CD4-positive, alpha-beta T cell (primary cell): ENCODE measurements at regions of chr6 and their contacts with region 1.

Region 1: GRCh38 chr6:1524040-1524480 is 85.7 kb upstream of the FOXC1 start:
- DNase-seq: peak; percentile 54 to 89 (median 70)
- ATAC-seq: peak; percentile 67
- H3K4me3 ChIP-seq: peak overlapping the region; percentile 40
- H3K4me3 Mint-ChIP-seq: peak overlapping the region; percentile 75
- H3K27ac ChIP-seq: peak overlapping the region in 1 of 2 donors; percentile 45
- H3K27ac Mint-ChIP-seq: peak overlapping the region; percentile 94
- H3K4me1 ChIP-seq: peaks cover 54% of the 10 kb centered on the region
- H3K4me1 Mint-ChIP-seq: peaks cover 52% of the 10 kb centered on the region
- H3K27me3 ChIP-seq: no peaks in the 10 kb centered on the region
- H3K27me3 Mint-ChIP-seq: no peaks in the 10 kb centered on the region
- CTCF ChIP-seq: peak; percentile 94

Region 2: GRCh38 chr6:912871-913835 is 610.9 kb before region 1 on chr6:
- CTCF ChIA-PET with region 1: no interaction called
- POLR2A ChIA-PET with region 1: no interaction called
- intact Hi-C with region 1: no loop called
- DNase-seq: no peak
- ATAC-seq: no peak
- H3K4me3 ChIP-seq: no peak overlapping the region
- H3K4me3 Mint-ChIP-seq: no peak overlapping the region
- H3K27ac ChIP-seq: no peak overlapping the region
- H3K27ac Mint-ChIP-seq: no peak overlapping the region
- H3K4me1 ChIP-seq: no peaks in the 10 kb centered on the region
- H3K4me1 Mint-ChIP-seq: no peaks in the 10 kb centered on the region
- H3K27me3 ChIP-seq: peaks cover 10 to 13% of the 10 kb centered on the region in 2 experiments
- H3K27me3 Mint-ChIP-seq: peaks cover 69% of the 10 kb centered on the region
- CTCF ChIP-seq: no peak

Region 3: GRCh38 chr6:1554476-1555310 is 30.6 kb after region 1 on chr6:
- CTCF ChIA-PET with region 1: interaction called, 16 read pairs
- POLR2A ChIA-PET with region 1: interaction called, 93 read pairs
- intact Hi-C with region 1: loop called (anchors 1 kb)
- DNase-seq: peak; percentile 41 to 86 (median 60)
- ATAC-seq: peak; percentile 88
- H3K4me3 ChIP-seq: peak overlapping the region; percentile 72
- H3K4me3 Mint-ChIP-seq: peak overlapping the region; percentile 80
- H3K27ac ChIP-seq: peak overlapping the region in 1 of 2 donors; percentile 25
- H3K27ac Mint-ChIP-seq: peak overlapping the region; percentile 78
- H3K4me1 ChIP-seq: peaks cover 15% of the 10 kb centered on the region
- H3K4me1 Mint-ChIP-seq: peaks cover 43% of the 10 kb centered on the region
- H3K27me3 ChIP-seq: no peaks in the 10 kb centered on the region
- H3K27me3 Mint-ChIP-seq: no peaks in the 10 kb centered on the region
- CTCF ChIP-seq: peak; percentile 81

Region 4: DNA sequence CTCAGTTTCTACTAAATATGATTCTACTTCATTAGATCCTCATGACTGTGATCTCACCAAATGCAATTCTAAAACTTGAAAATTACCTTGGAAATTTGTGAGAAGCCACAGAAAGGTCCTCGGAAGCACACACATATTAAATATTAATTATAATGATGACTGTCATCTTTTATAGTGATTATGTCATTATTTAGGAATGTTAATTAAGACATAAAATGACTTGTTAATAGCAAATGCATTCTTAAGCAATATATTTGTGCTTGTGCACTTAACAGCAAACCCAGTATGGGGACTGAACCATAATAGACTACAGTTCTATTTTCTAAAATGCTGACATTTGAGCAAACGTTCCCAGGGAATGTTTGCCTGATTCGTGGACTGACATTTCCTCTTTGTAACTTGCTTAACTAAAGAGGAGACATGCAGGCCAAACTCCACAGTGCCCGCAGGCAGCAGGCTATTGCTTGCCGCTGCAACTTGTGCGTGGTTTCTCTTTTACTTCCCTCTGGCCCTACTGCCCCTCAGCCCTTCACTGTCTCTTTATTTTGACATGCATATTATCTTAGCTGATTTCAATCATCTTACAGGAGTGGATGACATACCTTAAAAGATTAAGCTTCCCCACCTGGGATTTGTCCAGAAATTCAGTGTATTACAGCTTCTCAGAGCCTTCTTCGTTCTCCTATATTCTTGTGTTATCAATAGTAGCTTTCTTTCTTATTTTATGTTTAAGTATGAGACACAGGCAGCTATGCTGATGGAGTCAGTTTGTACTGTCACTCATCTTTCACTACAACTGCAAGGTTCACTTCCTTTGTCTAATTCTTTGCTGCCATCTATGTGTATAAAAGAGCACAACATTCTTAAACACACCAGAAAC is 579.8 kb after region 1 on chr6:
- CTCF ChIA-PET with region 1: no interaction called
- POLR2A ChIA-PET with region 1: no interaction called
- intact Hi-C with region 1: loop called (anchors 2 kb)
- DNase-seq: peak in 3 of 14 experiments; percentile 44 to 50 (median 45)
- ATAC-seq: peak; percentile 58
- H3K4me3 ChIP-seq: no peak overlapping the region
- H3K4me3 Mint-ChIP-seq: no peak overlapping the region
- H3K27ac ChIP-seq: no peak overlapping the region
- H3K27ac Mint-ChIP-seq: no peak overlapping the region
- H3K4me1 ChIP-seq: no peaks in the 10 kb centered on the region
- H3K4me1 Mint-ChIP-seq: no peaks in the 10 kb centered on the region
- H3K27me3 ChIP-seq: no peaks in the 10 kb centered on the region
- H3K27me3 Mint-ChIP-seq: no peaks in the 10 kb centered on the region
- CTCF ChIP-seq: peak; percentile 63

Region 5: DNA sequence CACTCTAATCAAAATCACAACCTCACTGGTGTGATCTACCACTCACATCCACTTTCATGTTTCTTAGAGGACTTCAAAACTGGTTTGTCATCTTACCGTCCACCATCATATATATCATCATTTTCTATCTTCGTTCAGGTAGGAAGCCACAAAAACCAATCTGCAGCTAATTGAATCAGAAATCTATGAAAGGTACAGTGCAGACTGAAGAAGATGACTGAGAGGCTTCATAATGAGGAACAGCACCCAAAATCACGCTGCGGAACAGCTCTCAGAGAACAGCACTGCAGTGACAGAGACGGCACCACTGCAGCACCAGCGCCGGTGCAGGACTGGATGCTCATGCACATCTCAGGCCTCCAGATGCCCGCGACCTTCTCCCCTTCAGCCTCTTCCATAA is 708.4 kb after region 1 on chr6:
- CTCF ChIA-PET with region 1: no interaction called
- POLR2A ChIA-PET with region 1: no interaction called
- intact Hi-C with region 1: no loop called
- DNase-seq: no peak
- ATAC-seq: no peak
- H3K4me3 ChIP-seq: no peak overlapping the region
- H3K4me3 Mint-ChIP-seq: no peak overlapping the region
- H3K27ac ChIP-seq: no peak overlapping the region
- H3K27ac Mint-ChIP-seq: no peak overlapping the region
- H3K4me1 ChIP-seq: no peaks in the 10 kb centered on the region
- H3K4me1 Mint-ChIP-seq: peaks cover 20% of the 10 kb centered on the region
- H3K27me3 ChIP-seq: no peaks in the 10 kb centered on the region
- H3K27me3 Mint-ChIP-seq: no peaks in the 10 kb centered on the region
- CTCF ChIP-seq: no peak

Region 6: DNA sequence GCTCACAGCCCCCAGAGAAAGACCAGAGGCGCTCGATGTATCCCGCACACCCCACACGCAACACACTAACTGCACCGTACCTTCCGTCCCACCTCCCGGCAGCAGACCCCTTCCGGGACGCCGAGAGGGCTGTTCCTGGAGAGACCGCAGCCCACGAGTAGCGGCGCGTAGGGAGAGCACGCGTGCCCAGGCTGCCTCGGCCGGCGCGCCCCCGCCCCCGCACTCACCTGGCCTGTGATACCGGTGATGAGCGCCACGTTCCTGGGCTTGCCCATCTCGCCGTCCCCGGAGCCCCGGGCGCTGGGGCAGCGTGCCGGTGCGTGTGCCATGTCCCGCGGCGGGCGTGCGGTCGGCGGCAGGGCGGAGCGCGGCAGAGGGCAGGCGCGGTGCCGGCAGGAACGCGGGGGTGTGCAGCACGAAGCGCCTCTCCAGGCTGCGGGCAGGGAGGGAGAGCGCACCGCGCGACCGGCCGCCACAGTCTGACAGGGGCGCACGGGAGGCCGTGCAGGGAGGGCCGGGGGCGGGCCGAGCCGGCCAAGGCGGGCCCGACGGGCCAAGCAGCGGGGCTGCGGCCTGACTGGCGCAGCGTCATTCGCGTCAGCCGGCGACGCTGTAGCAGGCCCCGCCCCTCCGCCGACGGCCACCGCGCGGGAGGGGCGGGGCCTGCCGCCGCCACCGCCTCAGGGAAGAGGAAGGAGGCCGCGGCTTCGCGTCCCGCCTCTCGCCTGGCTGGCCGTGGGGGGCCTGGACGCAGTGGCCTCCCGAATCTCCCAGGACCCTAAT is 721.2 kb after region 1 on chr6 and contains the start of gene GMDS:
- CTCF ChIA-PET with region 1: no interaction called
- POLR2A ChIA-PET with region 1: no interaction called
- intact Hi-C with region 1: loop called in 1 of 2 experiments (anchors 5 kb)
- DNase-seq: peak; percentile 60 to 95 (median 78)
- ATAC-seq: peak; percentile 88
- H3K4me3 ChIP-seq: peak within 1 kb of the TSS; percentile 97
- H3K4me3 Mint-ChIP-seq: peak within 1 kb of the TSS; percentile 94
- H3K27ac ChIP-seq: peak within 1 kb of the TSS; percentile 50 to 88
- H3K27ac Mint-ChIP-seq: peak within 1 kb of the TSS; percentile 96
- H3K4me1 ChIP-seq: peaks cover 29% of the 10 kb centered on the region
- H3K4me1 Mint-ChIP-seq: peaks cover 69% of the 10 kb centered on the region
- H3K27me3 ChIP-seq: no peaks in the 10 kb centered on the region
- H3K27me3 Mint-ChIP-seq: no peaks in the 10 kb centered on the region
- CTCF ChIP-seq: no peak
- total RNA-seq, gene GMDS: 13.9 to 16.4 TPM

Region 7: DNA sequence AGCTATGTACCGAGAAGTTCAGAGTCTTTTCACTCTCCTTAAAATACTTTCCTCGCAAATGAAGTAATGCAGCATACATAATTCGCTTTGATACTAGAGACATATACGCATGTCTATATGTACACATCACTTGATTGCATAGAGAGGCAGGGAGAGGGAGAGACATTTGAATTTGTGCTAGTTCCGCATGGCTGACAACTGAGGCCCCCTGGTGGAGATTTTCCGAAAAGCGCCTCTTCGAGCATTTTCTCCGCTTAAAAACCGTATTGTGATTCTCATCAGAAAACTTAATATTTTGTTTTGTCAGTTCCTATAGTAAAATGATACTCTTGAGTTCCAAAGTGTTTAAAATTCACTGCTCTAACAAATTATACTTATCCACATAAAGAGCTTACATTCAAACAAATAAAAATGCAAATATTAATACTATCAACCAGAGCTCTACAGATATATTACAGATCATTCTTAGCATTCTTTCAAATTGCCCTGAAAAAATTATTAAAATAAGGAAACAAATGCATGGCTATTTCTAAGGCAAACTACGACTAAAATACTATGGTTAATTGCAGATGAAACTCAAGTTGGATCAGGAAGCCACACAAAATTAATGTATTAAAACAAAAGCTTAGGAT is 1226.0 kb after region 1 on chr6:
- CTCF ChIA-PET with region 1: no interaction called
- POLR2A ChIA-PET with region 1: no interaction called
- intact Hi-C with region 1: loop called in 1 of 2 experiments (anchors 10 kb)
- DNase-seq: peak; percentile 47 to 82 (median 62)
- ATAC-seq: peak; percentile 82
- H3K4me3 ChIP-seq: no peak overlapping the region
- H3K4me3 Mint-ChIP-seq: no peak overlapping the region
- H3K27ac ChIP-seq: no peak overlapping the region
- H3K27ac Mint-ChIP-seq: no peak overlapping the region
- H3K4me1 ChIP-seq: no peaks in the 10 kb centered on the region
- H3K4me1 Mint-ChIP-seq: peaks cover 6% of the 10 kb centered on the region
- H3K27me3 ChIP-seq: peaks cover 0 to 7% of the 10 kb centered on the region in 2 experiments
- H3K27me3 Mint-ChIP-seq: peaks cover 29% of the 10 kb centered on the region
- CTCF ChIP-seq: peak; percentile 95